Right ventricle myocardium inferior (tissue), 1 donor: ENCODE measurements at regions of chr22 and their contacts with region 1.

Region 1: GRCh38 chr22:29154364-29155048 is 51.2 kb upstream of the EMID1 start:
- DNase-seq: peak; percentile 93
- ATAC-seq: peak; percentile 64

Region 2: GRCh38 chr22:28855355-28856094 is 299.0 kb before region 1 on chr22:
- intact Hi-C with region 1: loop called (anchors 1 kb)
- DNase-seq: no peak
- ATAC-seq: peak; percentile 56

Region 3: GRCh38 chr22:29093501-29094300 is 60.8 kb before region 1 on chr22:
- intact Hi-C with region 1: loop called (anchors 5 kb)
- DNase-seq: no peak
- ATAC-seq: peak; percentile 85

Region 4: GRCh38 chr22:29245637-29246385 is 91.3 kb after region 1 on chr22:
- intact Hi-C with region 1: loop called (anchors 5 kb)
- DNase-seq: peak; percentile 89
- ATAC-seq: peak; percentile 88